PC-3 (cell line): ENCODE measurements at regions of chr3 and their contacts with region 1.

Region 1: DNA sequence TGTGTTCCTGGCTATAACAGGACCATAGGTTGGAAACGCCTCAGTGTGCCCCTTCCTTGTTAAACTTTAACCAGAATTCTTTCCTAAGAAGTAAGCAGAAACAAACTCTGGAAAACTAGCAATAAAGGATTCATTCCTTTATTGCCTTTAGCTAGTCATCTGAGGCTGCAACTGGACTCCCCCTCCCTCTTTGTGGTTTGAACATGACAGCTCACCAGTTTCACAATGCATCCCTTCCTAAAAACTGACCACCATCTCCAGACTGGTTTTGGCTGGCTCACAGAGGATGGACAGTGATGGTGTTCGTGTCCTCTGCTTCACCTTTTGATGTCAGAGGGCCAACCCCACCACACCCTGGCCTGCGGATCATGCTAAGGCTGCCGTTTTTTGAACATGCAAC is 27.9 kb upstream of the TGFBR2 start:
- DNase-seq: peak; percentile 94
- ATAC-seq: peak; percentile 91
- H3K4me3 ChIP-seq: no peak overlapping the region
- H3K27ac ChIP-seq: peak overlapping the region; percentile 83
- H3K4me1 ChIP-seq: peaks cover 22% of the 10 kb centered on the region
- H3K27me3 ChIP-seq: no peaks in the 10 kb centered on the region
- CTCF ChIP-seq: no peak

Region 2: GRCh38 chr3:30544812-30545211 is 33.7 kb before region 1 on chr3:
- CTCF ChIA-PET with region 1: no interaction called
- POLR2A ChIA-PET with region 1: no interaction called
- intact Hi-C with region 1: loop called (anchors 1 kb)
- DNase-seq: peak; percentile 95
- ATAC-seq: peak; percentile 96
- H3K4me3 ChIP-seq: no peak overlapping the region
- H3K27ac ChIP-seq: peak overlapping the region; percentile 88
- H3K4me1 ChIP-seq: peaks cover 25% of the 10 kb centered on the region
- H3K27me3 ChIP-seq: no peaks in the 10 kb centered on the region
- CTCF ChIP-seq: no peak